Heart right ventricle (tissue), 16 donors: ENCODE measurements at regions of chr17 and their contacts with region 1.

Region 1: DNA sequence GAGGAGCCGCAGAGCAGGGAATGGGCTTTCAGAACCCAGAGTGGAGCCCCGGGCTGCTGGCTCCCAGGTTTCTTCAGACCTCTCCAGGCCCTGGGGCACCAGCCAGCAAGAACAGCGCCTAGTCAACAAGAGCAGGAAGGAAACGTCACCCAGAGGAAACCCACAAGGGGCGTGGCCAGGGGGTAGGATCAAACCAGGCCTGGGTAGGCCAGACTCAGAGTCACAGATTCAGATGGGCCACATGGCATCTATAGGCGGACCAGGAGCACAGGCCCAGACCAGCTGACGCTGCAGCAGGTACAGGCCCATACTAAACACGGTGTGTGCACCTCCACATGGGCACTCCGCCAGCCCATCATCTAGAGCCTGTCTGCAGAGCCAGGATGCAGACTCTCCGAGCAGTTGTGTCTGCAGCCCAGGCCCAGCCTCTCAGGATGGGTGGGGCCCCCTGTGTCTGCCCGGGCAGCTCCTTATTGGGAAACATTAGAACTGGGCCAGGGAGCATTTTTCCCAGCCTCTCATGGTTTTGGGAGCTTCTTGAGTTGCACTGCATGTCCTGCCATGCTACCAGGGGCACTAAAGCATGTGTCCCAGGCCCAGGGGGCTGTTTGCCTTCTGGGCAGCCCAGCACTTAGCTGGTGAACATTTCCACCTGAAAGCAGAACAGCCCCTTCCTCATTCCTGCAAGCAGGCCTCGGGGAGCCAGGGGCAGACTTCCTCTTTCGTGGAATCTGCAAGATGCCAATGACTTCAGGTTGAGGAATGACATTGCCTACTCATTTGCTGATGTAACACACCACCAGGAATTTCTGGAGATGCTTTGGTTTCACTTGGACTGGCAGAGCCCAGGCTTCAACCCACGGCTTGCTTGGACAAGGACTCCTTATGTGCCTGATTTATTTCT is at the start of gene NLRP1:
- DNase-seq: peak; percentile 84 to 92
- ATAC-seq: peak; percentile 93 to 97 (median 95)
- H3K4me3 ChIP-seq: peak within 1 kb of the TSS; percentile 36 to 71 (median 63)
- H3K27ac ChIP-seq: peak within 1 kb of the TSS; percentile 74 to 96 (median 91)
- H3K4me1 ChIP-seq: peaks cover 10 to 56% (median 42%) of the 10 kb centered on the region in 9 donors
- H3K27me3 ChIP-seq: no peaks in the 10 kb centered on the region
- CTCF ChIP-seq: no peak
- total RNA-seq, gene NLRP1: 4.9 to 11.3 (median 7.6) TPM

Region 2: GRCh38 chr17:5706577-5707216 is 122.1 kb after region 1 on chr17:
- intact Hi-C with region 1: loop called in 5 of 10 experiments (anchors 2 to 5 kb)
- DNase-seq: peak; percentile 20 to 43
- ATAC-seq: peak in 1 of 8 donors; percentile 44
- H3K4me3 ChIP-seq: no peak overlapping the region
- H3K27ac ChIP-seq: no peak overlapping the region
- H3K4me1 ChIP-seq: no peaks in the 10 kb centered on the region
- H3K27me3 ChIP-seq: peaks cover 0 to 56% (median 19%) of the 10 kb centered on the region in 7 donors
- CTCF ChIP-seq: peak in 8 of 9 donors; percentile 20 to 72 (median 57)

Region 3: GRCh38 chr17:6045621-6046357 is 461.2 kb after region 1 on chr17:
- intact Hi-C with region 1: loop called in 1 of 10 experiments (anchors 5 kb)
- DNase-seq: no peak
- ATAC-seq: no peak
- H3K4me3 ChIP-seq: no peak overlapping the region
- H3K27ac ChIP-seq: no peak overlapping the region
- H3K4me1 ChIP-seq: peaks cover 0 to 3% (median 0%) of the 10 kb centered on the region in 9 donors
- H3K27me3 ChIP-seq: peaks cover 0 to 6% (median 0%) of the 10 kb centered on the region in 7 donors
- CTCF ChIP-seq: peak in 3 of 9 donors; percentile 13 to 32 (median 23)

Region 4: DNA sequence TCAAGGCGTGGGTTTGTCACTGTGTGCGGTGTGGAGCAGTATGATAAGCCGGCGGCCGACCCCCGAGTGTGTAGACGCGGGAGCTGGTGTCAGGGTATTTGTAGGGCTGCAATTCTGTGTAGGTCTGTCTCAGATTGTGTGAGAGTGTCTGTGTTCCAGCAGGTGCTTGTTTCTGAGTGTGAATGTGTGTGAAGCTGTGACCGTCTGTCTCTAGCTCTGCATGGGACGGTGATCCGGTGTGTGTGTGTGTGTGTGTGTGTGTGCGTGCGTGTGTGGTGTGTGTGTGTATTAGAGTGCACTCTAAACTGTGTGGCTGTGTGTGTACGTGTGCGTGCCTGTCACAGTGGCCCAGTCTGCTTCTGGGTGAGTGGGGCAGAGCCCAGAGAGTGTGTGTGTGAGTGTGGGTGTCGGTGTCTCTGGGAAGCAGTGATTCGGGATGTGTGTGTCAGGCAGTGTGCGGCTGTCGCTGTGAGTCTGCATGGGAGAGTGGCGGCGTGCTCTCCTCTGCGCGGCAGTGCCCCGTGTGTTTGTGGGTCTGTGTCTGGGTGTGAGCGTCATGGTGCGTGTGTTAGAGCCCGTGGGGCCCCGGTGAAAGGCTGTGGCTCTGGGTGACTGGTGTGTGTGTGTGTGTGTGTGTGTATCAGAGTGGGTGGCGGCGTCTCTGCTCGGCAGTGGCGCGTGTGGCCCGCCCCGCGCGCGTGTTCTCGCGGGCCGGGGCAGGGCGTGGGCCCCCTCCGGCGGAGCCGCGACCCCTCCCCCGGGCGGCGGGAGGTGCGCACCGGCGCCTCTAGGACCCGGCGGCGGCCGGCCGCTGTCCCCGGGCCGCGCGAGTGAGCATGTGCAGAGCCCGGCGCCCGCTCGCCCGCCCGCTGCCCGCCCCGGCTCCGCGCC is 485.1 kb after region 1 on chr17 and contains the start of gene WSCD1:
- intact Hi-C with region 1: loop called in 1 of 10 experiments (anchors 10 kb)
- DNase-seq: peak in 1 of 2 donors; percentile 42
- ATAC-seq: peak; percentile 27 to 81 (median 66)
- H3K4me3 ChIP-seq: peak within 1 kb of the TSS; percentile 38 to 81 (median 63)
- H3K27ac ChIP-seq: peak within 1 kb of the TSS in 5 of 10 donors; percentile 12 to 64 (median 44)
- H3K4me1 ChIP-seq: peaks cover 0 to 12% (median 7%) of the 10 kb centered on the region in 9 donors
- H3K27me3 ChIP-seq: peaks cover 0 to 52% (median 32%) of the 10 kb centered on the region in 7 donors
- CTCF ChIP-seq: no peak
- total RNA-seq, gene WSCD1: 3.4 to 13.8 (median 4.2) TPM

Region 5: DNA sequence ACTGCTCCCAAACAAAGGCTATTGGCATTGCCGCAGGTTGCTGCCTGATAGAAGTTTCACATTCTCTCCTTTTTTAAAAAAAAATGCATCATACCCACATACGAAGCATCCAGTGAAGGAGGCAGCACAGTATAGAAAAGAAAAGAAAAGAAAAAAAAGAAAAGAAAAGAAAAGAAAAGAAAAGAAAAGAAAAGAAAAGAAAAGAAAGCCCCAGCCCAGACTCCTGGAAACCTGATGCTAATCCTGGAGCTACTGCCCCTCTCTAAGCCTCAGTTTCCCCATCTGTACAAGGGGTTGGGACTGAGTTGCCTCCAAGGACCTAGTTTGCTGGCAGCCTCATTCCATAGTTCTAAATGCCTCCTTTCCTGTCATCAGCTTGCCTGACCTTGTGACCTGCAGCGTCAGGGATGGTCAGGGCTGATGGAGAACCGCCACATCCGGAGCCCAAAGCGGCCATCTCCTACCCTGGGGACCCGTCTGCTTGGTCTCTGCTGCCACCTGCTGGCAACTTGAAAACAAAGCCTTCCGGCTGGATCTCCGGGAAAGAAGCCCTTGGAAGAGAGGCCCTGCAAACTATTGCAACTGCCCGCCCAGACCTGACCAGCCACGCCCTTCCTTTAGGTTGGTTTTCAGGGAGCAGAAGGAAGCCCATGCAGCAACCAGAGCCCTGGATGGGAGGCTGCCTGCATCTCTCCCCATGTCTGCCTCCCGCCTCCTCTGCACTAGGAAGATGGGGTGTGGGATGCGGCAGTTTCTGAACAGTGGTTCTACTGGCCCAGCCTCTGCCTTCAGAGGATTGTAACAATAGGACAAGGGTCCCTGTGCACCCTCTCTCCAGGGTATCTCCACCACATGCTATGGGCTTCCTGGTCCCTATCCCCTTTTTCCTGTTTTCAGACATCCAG is 837.3 kb after region 1 on chr17:
- intact Hi-C with region 1: loop called in 8 of 10 experiments (anchors 1 to 5 kb)
- DNase-seq: peak; percentile 75 to 76
- ATAC-seq: peak; percentile 70 to 93 (median 86)
- H3K4me3 ChIP-seq: no peak overlapping the region
- H3K27ac ChIP-seq: no peak overlapping the region
- H3K4me1 ChIP-seq: no peaks in the 10 kb centered on the region
- H3K27me3 ChIP-seq: peaks cover 0 to 45% (median 15%) of the 10 kb centered on the region in 7 donors
- CTCF ChIP-seq: peak; percentile 74 to 93 (median 88)

Region 6: DNA sequence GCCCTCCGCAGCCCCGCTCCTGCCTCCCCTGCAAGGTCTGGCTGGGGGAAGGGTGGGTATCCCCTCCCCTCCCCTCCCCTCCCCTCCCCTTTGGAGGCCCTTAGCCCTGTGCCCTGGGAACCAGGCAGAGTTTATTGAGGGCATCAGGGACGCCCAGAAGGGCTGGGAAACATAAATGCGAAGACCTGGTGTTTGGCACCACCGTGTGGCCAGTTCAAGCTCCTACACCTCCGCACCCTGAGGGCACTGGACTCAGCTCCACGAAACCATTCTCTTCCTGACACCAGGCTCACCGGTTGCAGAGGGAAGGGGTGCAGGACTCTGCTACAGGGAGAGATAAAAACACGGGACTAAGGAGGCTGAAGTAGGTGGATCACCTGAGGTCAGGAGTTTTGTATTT is 851.3 kb after region 1 on chr17:
- intact Hi-C with region 1: loop called in 3 of 10 experiments (anchors 5 kb)
- DNase-seq: peak; percentile 37 to 41
- ATAC-seq: peak; percentile 73 to 92 (median 90)
- H3K4me3 ChIP-seq: no peak overlapping the region
- H3K27ac ChIP-seq: no peak overlapping the region
- H3K4me1 ChIP-seq: no peaks in the 10 kb centered on the region
- H3K27me3 ChIP-seq: peaks cover 0 to 59% (median 38%) of the 10 kb centered on the region in 7 donors
- CTCF ChIP-seq: peak; percentile 58 to 84 (median 79)